Dendritic cell treated with granulocyte-macrophage colony-stimulating factor and Interleukin-4, amounts not matched to agents 40 ng/mL and 50 ng/mL, for 4 days (primary cell): ENCODE measurements at regions of chr3 and their contacts with region 1.

Region 1: GRCh38 chr3:28241221-28242160 is at the start of gene CMC1:
- H3K4me3 Mint-ChIP-seq: peak within 1 kb of the TSS; percentile 85
- H3K27ac Mint-ChIP-seq: peak within 1 kb of the TSS; percentile 92
- H3K4me1 Mint-ChIP-seq: peaks cover 44% of the 10 kb centered on the region
- H3K27me3 Mint-ChIP-seq: peaks cover under 1% of the 10 kb centered on the region

Region 2: DNA sequence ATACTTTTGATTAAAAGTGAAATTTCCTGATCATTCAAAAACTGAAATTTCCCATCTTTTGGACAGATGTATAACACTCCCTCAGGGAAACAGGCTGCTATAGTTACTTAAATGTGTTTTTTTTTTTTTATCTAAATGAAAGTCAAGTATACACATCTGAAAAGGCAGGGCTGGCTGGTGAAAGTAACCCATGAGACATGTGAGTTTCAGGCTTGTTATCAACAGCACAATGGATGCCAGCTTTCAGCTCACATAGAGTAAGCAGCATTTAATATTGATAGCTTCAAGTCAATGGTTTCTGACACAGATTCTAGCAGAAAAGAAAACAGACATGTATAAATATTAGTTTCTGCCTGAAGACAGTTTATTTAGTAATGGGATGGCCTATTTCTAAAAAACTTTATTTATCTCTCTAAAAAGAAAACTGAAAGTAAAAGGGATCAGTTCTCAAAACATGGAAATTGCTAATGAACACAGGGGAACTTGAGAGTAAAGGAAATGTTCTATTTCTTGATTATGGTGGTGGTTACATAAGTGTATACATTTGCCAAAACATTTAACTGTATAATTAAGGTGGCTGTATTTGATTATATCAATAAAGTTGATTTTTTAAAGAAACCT is 89.8 kb before region 1 on chr3:
- intact Hi-C with region 1: loop called (anchors 10 kb)
- H3K4me3 Mint-ChIP-seq: no peak overlapping the region
- H3K27ac Mint-ChIP-seq: no peak overlapping the region
- H3K4me1 Mint-ChIP-seq: no peaks in the 10 kb centered on the region
- H3K27me3 Mint-ChIP-seq: no peaks in the 10 kb centered on the region